Dendritic cell treated with granulocyte-macrophage colony-stimulating factor and Interleukin-4, amounts not matched to agents 40 ng/mL and 50 ng/mL, for 4 days (primary cell): ENCODE measurements at regions of chrX and their contacts with region 1.

Region 1: DNA sequence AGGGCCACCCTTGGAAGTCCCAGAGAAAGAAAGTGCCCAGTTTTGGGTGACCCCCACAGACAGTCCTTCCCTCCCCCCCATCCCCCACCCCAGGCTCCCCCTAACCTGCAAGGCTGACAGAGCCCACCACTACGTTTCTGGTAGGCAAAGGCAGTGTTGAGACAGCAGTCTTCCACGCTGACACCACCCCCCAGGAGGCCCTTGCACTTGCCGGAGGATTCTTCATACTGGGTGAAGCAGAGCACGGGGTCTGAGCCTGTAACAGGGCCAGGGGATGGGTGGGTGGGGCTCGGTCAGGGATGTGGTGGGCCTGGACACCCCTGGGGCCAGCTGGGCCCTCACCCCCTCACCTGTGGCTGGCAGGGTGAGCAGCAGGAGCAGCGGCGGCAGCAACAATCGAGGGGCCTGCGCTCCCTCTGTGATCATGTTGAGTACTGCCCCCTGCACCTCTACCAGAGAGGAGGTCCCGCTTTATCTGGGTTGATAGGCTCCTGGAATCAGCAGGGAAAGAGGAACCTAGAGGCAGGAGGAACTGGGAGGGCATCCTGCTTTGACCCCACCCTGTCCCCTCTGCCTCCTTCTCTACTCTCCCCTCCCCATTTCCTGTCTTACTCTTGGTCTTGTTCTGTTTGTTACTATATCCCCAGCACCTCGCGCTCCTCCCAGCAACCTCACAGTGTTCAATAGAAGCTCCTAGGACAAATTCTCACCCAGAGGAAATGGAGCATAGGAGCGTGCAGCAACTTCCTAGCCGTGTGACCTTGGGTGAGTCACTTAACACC is at the start of gene CFP:
- H3K4me3 Mint-ChIP-seq: peak within 1 kb of the TSS; percentile 81
- H3K27ac Mint-ChIP-seq: peak within 1 kb of the TSS; percentile 87
- H3K4me1 Mint-ChIP-seq: peaks cover 65% of the 10 kb centered on the region
- H3K27me3 Mint-ChIP-seq: no peaks in the 10 kb centered on the region

Region 2: GRCh38 chrX:47581731-47582647 is 47.6 kb before region 1 on chrX and contains the start of gene TIMP1:
- intact Hi-C with region 1: loop called (anchors 5 kb)
- H3K4me3 Mint-ChIP-seq: peak within 1 kb of the TSS; percentile 77
- H3K27ac Mint-ChIP-seq: peak within 1 kb of the TSS; percentile 77
- H3K4me1 Mint-ChIP-seq: peaks cover 83% of the 10 kb centered on the region
- H3K27me3 Mint-ChIP-seq: peaks cover 1% of the 10 kb centered on the region